ENCODE measurements at regions of chr6 and their contacts with region 1.

Region 1: GRCh38 chr6:97712751-97713150 is 429.7 kb upstream of the MMS22L start:
- DNase-seq: no peak
- H3K4me3 ChIP-seq: no peak overlapping the region
- H3K27ac ChIP-seq: no peak overlapping the region
- H3K4me1 ChIP-seq: no peaks in the 10 kb centered on the region
- H3K27me3 ChIP-seq: no peaks in the 10 kb centered on the region
- CTCF ChIP-seq: no peak
- EP300 ChIP-seq: no peak
- POLR2A ChIP-seq: no peak

Region 2: GRCh38 chr6:97423190-97423589 is 289.6 kb before region 1 on chr6:
- intact Hi-C with region 1: no loop called
- DNase-seq: no peak
- H3K4me3 ChIP-seq: no peak overlapping the region
- H3K27ac ChIP-seq: no peak overlapping the region
- H3K4me1 ChIP-seq: no peaks in the 10 kb centered on the region
- H3K27me3 ChIP-seq: no peaks in the 10 kb centered on the region
- CTCF ChIP-seq: no peak
- EP300 ChIP-seq: no peak
- POLR2A ChIP-seq: no peak

Region 3: DNA sequence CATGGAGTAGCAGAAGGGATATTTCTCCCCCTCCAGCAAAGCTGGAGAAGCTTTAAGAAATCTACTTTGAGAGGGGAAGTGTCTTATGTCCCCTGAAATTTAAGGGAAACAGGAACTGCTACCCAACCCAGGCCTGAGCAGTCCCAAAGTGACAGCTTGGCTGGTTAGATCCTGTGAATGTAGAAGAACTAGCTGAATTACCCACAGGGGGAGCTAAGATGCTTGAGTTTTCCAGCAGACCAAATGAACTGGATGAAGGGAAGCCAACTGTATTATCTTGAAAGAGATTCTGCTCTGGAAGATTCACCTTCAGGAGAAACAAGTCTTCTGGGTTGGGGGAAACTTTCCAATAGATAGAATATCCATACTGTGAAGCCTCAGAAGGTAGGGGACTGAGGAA is 126.4 kb before region 1 on chr6:
- intact Hi-C with region 1: no loop called
- DNase-seq: no peak
- H3K4me3 ChIP-seq: no peak overlapping the region
- H3K27ac ChIP-seq: no peak overlapping the region
- H3K4me1 ChIP-seq: no peaks in the 10 kb centered on the region
- H3K27me3 ChIP-seq: no peaks in the 10 kb centered on the region
- CTCF ChIP-seq: no peak
- EP300 ChIP-seq: no peak
- POLR2A ChIP-seq: no peak

Region 4: GRCh38 chr6:97757181-97757976 is 44.6 kb after region 1 on chr6:
- intact Hi-C with region 1: loop called in 1 of 4 experiments (anchors 1 kb)
- DNase-seq: no peak
- H3K4me3 ChIP-seq: no peak overlapping the region
- H3K27ac ChIP-seq: no peak overlapping the region
- H3K4me1 ChIP-seq: no peaks in the 10 kb centered on the region
- H3K27me3 ChIP-seq: no peaks in the 10 kb centered on the region
- CTCF ChIP-seq: no peak
- EP300 ChIP-seq: no peak
- POLR2A ChIP-seq: no peak